ENCODE measurements at regions of chr17 and their contacts with region 1.

Region 1: GRCh38 chr17:7403977-7404736 is at the start of gene TMEM256:
- DNase-seq: peak; percentile 94
- H3K4me3 Mint-ChIP-seq: peak within 1 kb of the TSS; percentile 92
- H3K27ac Mint-ChIP-seq: peak within 1 kb of the TSS; percentile 95
- H3K4me1 Mint-ChIP-seq: peaks cover 13% of the 10 kb centered on the region
- H3K27me3 Mint-ChIP-seq: peaks cover 21% of the 10 kb centered on the region
- total RNA-seq, gene TMEM256: 53.5 and 54.7 TPM in 2 replicates

Region 2: DNA sequence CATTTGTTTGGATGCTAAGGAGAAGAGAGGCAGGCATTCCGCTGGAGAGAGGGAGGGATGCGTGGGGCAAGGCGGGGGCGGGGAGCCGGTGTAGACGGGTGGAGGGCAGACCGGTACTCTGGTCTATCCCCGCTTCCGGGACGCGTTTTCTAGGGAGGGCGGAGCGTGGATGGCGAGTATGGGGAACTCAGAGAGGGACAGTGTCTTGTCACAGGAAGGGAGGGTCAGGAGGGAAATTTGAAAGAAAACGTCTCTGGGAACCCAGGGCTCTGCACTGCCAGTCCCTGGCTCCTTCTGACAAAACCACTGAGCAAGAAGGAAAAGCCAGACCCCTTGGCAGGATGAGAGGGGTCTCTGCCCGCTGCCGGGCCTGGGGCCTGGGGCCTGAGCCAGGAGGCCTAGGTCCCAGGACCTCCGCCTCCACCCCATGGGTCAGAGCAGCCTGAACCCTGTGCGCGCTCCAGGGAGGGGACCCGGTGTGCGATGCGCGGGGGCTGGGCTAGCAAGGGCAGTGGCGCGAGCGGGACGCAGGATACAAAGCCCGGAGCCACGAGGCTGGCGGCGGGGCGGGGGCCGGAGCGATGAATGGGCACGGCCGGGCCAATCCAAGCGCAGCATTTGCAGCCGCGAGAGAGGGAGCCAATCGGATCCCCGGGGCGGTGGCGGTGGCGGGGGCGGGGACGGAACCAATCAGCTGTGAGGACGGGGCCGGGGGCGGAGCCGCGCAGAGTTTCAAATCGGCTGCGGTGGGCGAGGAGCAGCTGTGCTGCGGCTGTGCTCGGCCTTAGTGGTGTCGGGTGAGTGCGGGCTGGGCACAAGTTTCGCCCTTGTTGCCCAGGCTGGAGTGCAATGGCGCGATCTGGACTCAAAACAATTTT is 960.2 kb before region 1 on chr17 and contains the start of gene PIMREG:
- intact Hi-C with region 1: loop called (anchors 5 kb)
- DNase-seq: peak; percentile 91
- H3K4me3 Mint-ChIP-seq: peak within 1 kb of the TSS; percentile 95
- H3K27ac Mint-ChIP-seq: peak within 1 kb of the TSS; percentile 97
- H3K4me1 Mint-ChIP-seq: peaks cover 14% of the 10 kb centered on the region
- H3K27me3 Mint-ChIP-seq: peaks cover 32% of the 10 kb centered on the region
- total RNA-seq, gene PIMREG: 6.8 and 8.0 TPM in 2 replicates

Region 3: GRCh38 chr17:7252176-7253043 is 151.7 kb before region 1 on chr17 and contains the start of gene ELP5:
- intact Hi-C with region 1: loop called (anchors 5 kb)
- DNase-seq: peak; percentile 86
- H3K4me3 Mint-ChIP-seq: peak within 1 kb of the TSS; percentile 98
- H3K27ac Mint-ChIP-seq: peak within 1 kb of the TSS; percentile 99
- H3K4me1 Mint-ChIP-seq: peaks cover 42% of the 10 kb centered on the region
- H3K27me3 Mint-ChIP-seq: peaks cover 5% of the 10 kb centered on the region
- total RNA-seq, gene ELP5: 73.6 and 75.5 TPM in 2 replicates

Region 4: DNA sequence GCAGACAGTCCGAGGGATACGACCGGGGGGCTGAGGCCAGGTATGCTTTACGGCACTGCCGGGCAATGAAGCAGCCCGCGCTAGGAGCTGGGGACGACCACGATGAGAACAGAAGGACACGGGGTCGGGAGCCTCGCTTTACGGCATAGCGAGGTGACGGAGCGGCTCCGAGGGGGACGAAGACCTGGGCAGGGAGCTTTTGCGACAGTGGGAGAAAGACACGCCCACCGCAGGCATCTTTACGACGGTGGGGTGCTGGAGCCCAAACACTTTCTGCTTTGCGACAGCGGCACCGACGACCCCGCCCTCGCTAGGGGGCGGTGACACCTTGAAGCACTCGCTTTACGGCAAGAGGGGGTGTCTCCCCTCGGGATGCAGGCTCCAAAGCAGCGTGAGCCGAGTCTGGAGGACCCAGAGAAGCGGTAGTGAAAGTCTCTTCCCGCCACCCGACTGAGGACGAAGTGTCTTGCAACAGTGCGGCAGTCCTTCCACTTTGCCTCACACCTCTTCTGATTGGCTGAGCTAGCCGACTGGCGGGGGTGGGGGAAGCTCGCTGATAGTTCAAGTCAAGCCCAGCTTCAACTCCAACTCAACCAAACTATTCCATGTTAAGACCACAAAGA is 74.7 kb before region 1 on chr17:
- intact Hi-C with region 1: loop called (anchors 1 kb)
- DNase-seq: peak; percentile 94
- H3K4me3 Mint-ChIP-seq: peak overlapping the region; percentile 93
- H3K27ac Mint-ChIP-seq: peak overlapping the region; percentile 94
- H3K4me1 Mint-ChIP-seq: peaks cover 38% of the 10 kb centered on the region
- H3K27me3 Mint-ChIP-seq: no peaks in the 10 kb centered on the region

Region 5: GRCh38 chr17:7363311-7363710 is 40.8 kb before region 1 on chr17:
- intact Hi-C with region 1: no loop called
- DNase-seq: no peak
- H3K4me3 Mint-ChIP-seq: no peak overlapping the region
- H3K27ac Mint-ChIP-seq: no peak overlapping the region
- H3K4me1 Mint-ChIP-seq: no peaks in the 10 kb centered on the region
- H3K27me3 Mint-ChIP-seq: peaks cover 3% of the 10 kb centered on the region

Region 6: GRCh38 chr17:7435221-7435675 is 31.1 kb after region 1 on chr17 and contains the start of gene TMEM102:
- intact Hi-C with region 1: loop called (anchors 1 kb)
- DNase-seq: peak; percentile 97
- H3K4me3 Mint-ChIP-seq: peak within 1 kb of the TSS; percentile 91
- H3K27ac Mint-ChIP-seq: peak within 1 kb of the TSS; percentile 94
- H3K4me1 Mint-ChIP-seq: peaks cover 38% of the 10 kb centered on the region
- H3K27me3 Mint-ChIP-seq: peaks cover 5% of the 10 kb centered on the region
- total RNA-seq, gene TMEM102: 12.3 and 14.0 TPM in 2 replicates

Region 7: GRCh38 chr17:7445619-7445968 is 41.4 kb after region 1 on chr17:
- intact Hi-C with region 1: no loop called
- DNase-seq: peak; percentile 24
- H3K4me3 Mint-ChIP-seq: peak overlapping the region; percentile 79
- H3K27ac Mint-ChIP-seq: peak overlapping the region; percentile 34
- H3K4me1 Mint-ChIP-seq: peaks cover 15% of the 10 kb centered on the region
- H3K27me3 Mint-ChIP-seq: peaks cover 19% of the 10 kb centered on the region

Region 8: DNA sequence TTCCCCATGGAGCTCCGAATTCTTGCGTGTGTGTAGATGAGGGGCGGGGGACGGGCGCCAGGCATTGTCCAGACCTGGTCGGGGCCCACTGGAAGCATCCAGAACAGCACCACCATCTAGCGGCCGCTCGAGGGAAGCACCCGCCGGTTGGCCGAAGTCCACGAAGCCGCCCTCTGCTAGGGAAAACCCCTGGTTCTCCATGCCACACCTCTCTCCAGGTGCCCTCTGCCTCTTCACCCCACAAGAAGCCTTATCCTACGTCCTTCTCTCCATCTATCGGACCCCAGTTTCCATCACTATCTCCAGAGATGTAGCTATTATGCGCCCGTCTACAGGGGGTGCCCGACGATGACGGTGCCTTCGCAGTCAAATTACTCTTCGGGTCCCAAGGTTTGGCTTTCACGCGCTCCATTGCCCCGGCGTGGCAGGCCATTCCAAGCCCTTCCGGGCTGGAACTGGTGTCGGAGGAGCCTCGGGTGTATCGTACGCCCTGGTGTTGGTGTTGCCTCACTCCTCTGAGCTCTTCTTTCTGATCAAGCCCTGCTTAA is 156.9 kb after region 1 on chr17:
- intact Hi-C with region 1: loop called (anchors 1 kb)
- DNase-seq: peak; percentile 81
- H3K4me3 Mint-ChIP-seq: peak overlapping the region; percentile 97
- H3K27ac Mint-ChIP-seq: peak overlapping the region; percentile 92
- H3K4me1 Mint-ChIP-seq: peaks cover 56% of the 10 kb centered on the region
- H3K27me3 Mint-ChIP-seq: no peaks in the 10 kb centered on the region

Region 9: GRCh38 chr17:7931709-7932482 is 527.7 kb after region 1 on chr17 and contains the starts of genes CNTROB and TRAPPC1:
- intact Hi-C with region 1: loop called (anchors 5 kb)
- DNase-seq: peak; percentile 100
- H3K4me3 Mint-ChIP-seq: peak within 1 kb of the TSS; percentile 99
- H3K27ac Mint-ChIP-seq: peak within 1 kb of the TSS; percentile 99
- H3K4me1 Mint-ChIP-seq: peaks cover 42% of the 10 kb centered on the region
- H3K27me3 Mint-ChIP-seq: no peaks in the 10 kb centered on the region
- total RNA-seq, gene CNTROB: 53.5 and 54.7 TPM in 2 replicates
- total RNA-seq, gene TRAPPC1: 153 and 162 TPM in 2 replicates

Measured in activated T-helper 1 cell treated with anti-CD3 and anti-CD28 coated beads, Interleukin-12 subunit alpha, Interleukin-12 subunit beta, Interleukin-2, Interleukin-4 antibody, amounts not matched to agents 30 ng/mL and 10 ng/mL and 1 ng/mL, durations not matched to agents 14 hours and 24 hours and 36 hours (primary cell).